Posterior vena cava (tissue), 2 donors: ENCODE measurements at regions of chr13 and their contacts with region 1.

Region 1: DNA sequence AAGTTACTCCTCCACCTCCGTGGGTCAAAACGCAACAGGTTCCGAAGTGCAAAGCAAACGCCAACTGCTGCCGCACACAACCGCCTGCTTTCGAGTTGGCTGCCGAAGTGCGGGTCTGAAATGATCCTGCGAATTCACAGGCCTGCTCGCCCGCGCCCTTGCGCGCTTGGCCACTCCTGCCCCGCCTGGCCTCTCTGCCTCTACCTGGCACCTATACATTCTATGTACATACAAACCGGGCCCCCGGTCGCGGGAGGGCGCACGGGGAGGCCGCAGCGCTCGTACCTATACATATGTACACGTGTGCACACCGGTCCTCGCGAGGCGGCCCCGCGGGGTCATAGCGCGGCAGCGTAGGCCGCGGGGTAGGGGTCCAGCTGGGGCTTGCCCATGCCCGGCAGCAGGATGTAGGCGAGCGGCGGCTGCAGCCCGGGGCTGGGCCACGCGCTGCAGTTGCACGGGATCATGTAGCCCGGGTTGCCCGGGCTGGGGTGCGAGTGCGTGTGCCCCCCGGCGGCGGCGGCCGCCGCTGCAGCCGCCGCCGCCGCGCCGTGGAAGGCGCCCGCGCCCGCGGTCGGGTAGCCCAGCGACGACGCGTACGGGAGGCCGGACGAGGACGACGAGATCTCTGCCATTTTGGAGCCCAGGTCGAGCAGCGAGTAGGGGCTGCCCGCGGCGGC is 1.3 kb downstream of the SOX21 start:
- DNase-seq: peak; percentile 80

Region 2: DNA sequence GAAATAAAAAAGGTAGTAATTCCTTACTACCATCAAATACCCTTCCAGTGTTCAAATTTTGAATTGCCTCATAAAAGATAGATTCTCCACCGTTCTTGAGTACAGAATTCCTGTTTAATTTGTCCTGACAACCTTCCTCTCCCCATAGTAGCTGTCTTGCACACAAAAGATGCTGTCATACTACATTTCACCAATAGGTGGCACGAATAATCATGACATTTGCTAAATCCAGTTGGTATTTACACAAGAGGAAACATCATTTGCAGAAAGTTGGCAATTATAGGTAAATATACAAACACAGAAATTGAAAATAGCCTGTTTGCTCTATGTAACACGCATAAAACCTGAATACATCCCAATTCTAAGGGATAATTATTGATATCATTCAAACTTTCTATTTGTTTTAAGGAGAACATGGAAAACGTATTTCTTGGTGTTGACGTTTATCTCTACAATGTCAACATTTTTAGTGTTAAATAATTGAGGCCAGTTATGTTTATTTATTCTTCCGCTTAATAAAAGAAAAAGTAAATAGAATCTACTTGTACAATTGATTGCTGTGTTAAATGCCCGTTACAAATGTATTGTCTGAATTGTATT is 783.2 kb after region 1 on chr13:
- intact Hi-C with region 1: no loop called
- DNase-seq: no peak

Region 3: DNA sequence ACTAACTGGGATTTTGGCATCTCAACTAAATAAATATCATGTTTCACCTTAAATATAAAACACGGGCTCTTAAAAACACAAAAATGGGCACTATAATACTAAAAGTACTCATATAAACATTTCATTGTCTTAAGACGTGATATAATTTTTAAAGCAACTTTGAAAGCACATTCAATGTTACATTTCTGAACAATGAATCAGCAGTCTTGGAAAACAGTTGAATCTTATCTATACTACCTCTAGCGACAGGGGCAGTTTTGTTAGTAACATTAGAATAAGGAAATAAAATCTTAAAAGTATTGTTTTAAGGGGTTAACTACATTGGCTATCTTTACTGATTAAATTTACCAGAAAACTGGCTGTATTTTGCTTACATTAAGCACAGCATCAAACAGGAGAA is 1185.3 kb after region 1 on chr13:
- intact Hi-C with region 1: loop called in 1 of 2 experiments (anchors 10 kb)
- DNase-seq: no peak